CD4-positive, alpha-beta memory T cell (primary cell): ENCODE measurements at regions of chr9 and their contacts with region 1.

Region 1: GRCh38 chr9:36873247-36873875 is 160.7 kb downstream of the PAX5 start:
- DNase-seq: peak; percentile 59 to 64 (median 62)
- H3K4me3 ChIP-seq: no peak overlapping the region
- H3K4me3 Mint-ChIP-seq: no peak overlapping the region
- H3K27ac ChIP-seq: no peak overlapping the region
- H3K27ac Mint-ChIP-seq: peak overlapping the region in 1 of 7 donors; percentile 48
- H3K4me1 ChIP-seq: no peaks in the 10 kb centered on the region
- H3K4me1 Mint-ChIP-seq: peaks cover 0 to 2% (median 0%) of the 10 kb centered on the region in 4 donors
- H3K27me3 ChIP-seq: no peaks in the 10 kb centered on the region
- H3K27me3 Mint-ChIP-seq: peaks cover 0 to 9% of the 10 kb centered on the region in 2 donors

Region 2: DNA sequence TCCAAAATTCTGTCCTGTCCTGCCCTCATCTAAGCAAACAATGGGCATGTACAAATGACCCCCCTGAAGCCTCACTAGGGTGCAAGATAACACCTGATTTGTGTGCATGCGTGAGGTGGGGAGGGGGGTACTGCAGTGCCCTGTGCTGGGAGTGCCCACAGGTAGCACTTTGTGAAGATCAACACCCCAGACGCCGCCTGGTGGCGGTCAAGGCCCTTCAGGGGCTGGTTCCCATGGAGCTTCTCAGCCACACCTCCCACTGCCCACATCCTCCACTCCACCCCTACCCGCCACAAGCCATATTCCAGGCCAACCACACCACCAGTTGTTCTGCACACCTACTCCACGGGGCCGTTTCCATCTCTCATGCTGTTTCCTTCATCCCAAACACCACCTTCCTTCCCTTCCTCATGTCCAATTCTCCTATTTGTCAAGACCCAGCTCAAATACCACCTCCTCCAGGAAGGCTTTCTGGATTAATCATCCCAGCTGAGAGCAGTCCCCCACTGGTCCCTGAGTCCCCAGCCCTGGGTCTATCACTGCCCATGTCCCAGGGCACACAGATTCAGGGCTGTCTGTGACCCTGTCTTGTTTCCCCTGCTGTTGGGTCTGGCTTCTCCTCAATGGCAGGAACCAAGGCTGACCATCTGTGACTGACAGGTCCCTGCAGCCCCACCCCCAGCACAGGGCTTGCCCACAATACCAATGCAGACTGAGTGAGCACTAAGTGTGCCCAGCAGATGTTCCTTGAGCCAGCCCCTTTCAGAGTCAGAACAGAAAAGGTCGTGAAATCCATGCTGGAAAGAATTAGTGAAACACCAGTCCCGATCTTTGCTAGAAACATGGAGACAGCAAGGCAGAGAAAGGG is 17.7 kb before region 1 on chr9:
- CTCF ChIA-PET with region 1: interaction called, 22 read pairs
- POLR2A ChIA-PET with region 1: no interaction called
- intact Hi-C with region 1: no loop called
- DNase-seq: peak in 4 of 5 donors; percentile 13 to 22 (median 19)
- H3K4me3 ChIP-seq: no peak overlapping the region
- H3K4me3 Mint-ChIP-seq: no peak overlapping the region
- H3K27ac ChIP-seq: no peak overlapping the region
- H3K27ac Mint-ChIP-seq: peak overlapping the region in 3 of 7 donors; percentile 16 to 64 (median 33)
- H3K4me1 ChIP-seq: peaks cover 5% of the 10 kb centered on the region
- H3K4me1 Mint-ChIP-seq: peaks cover 4 to 10% (median 8%) of the 10 kb centered on the region in 4 donors
- H3K27me3 ChIP-seq: no peaks in the 10 kb centered on the region
- H3K27me3 Mint-ChIP-seq: peaks cover 0 to 7% of the 10 kb centered on the region in 2 donors

Region 3: GRCh38 chr9:36861528-36862205 is 11.7 kb before region 1 on chr9:
- CTCF ChIA-PET with region 1: interaction called, 22 read pairs
- POLR2A ChIA-PET with region 1: no interaction called
- intact Hi-C with region 1: no loop called
- DNase-seq: no peak
- H3K4me3 ChIP-seq: no peak overlapping the region
- H3K4me3 Mint-ChIP-seq: no peak overlapping the region
- H3K27ac ChIP-seq: no peak overlapping the region
- H3K27ac Mint-ChIP-seq: no peak overlapping the region
- H3K4me1 ChIP-seq: no peaks in the 10 kb centered on the region
- H3K4me1 Mint-ChIP-seq: no peaks in the 10 kb centered on the region
- H3K27me3 ChIP-seq: no peaks in the 10 kb centered on the region
- H3K27me3 Mint-ChIP-seq: peaks cover 2 to 10% of the 10 kb centered on the region in 2 donors

Region 4: DNA sequence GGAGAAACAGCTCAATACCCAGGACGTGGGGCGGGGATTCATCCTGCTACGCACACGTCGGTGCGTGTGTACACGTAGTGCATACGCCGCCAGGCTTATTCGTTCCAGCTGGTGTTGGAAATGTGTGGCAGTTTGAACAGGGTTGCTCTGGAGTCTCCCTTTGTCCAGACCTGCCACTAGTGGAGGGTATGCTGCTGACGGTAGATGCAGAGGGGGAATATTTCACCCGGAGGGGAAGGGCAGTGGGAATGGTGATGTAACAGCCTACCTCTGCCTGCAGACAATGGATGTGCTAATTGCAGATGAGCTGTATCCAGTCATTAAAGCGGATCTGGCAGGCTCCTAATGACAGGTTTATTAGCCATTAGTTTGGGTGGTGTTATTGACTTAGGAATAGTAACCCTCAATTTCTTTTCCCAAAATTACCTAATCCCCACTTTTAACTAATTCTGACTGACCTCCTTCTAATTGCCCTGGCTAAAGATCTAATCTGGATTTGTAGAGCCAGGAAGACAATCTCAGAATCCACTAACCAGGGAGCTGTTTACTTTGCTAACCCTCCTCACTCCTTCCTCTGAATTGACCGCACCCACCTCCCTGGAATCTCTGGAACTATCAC is 18.1 kb after region 1 on chr9:
- CTCF ChIA-PET with region 1: interaction called, 39 read pairs
- POLR2A ChIA-PET with region 1: no interaction called
- intact Hi-C with region 1: no loop called
- DNase-seq: no peak
- H3K4me3 ChIP-seq: no peak overlapping the region
- H3K4me3 Mint-ChIP-seq: no peak overlapping the region
- H3K27ac ChIP-seq: no peak overlapping the region
- H3K27ac Mint-ChIP-seq: no peak overlapping the region
- H3K4me1 ChIP-seq: no peaks in the 10 kb centered on the region
- H3K4me1 Mint-ChIP-seq: no peaks in the 10 kb centered on the region
- H3K27me3 ChIP-seq: no peaks in the 10 kb centered on the region
- H3K27me3 Mint-ChIP-seq: peaks cover 0 to 13% of the 10 kb centered on the region in 2 donors

Region 5: DNA sequence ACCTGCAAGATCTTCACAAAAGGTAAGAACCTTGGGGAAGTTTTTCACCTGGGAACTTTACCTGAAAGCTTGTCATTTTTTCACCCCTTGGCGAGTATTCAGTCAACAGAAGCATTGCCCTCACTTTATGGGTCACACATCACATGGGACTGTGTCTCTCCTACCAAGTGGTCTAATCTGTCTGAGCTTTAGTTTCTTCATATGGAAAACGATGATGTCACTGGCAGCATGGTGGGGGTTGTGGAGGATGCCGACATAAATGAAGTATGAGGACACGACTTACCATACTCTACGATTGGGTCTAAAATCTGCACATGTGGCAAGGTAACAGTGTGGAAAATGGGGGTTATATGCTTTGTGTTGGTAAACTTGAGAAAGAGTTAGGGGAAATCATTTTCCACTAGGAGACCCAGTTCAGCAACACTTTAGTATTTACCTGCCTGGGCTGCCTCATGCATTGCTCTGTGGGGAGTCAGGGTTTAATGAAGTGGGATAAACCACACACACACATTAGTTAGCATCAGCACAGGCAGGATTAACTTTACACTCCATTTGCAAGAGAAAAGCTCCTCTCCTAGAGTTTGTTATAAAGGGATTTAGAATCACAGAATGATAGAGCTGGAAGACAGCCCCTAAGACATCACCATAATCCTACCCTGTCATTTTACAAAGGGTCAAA is 180.5 kb after region 1 on chr9:
- CTCF ChIA-PET with region 1: no interaction called
- POLR2A ChIA-PET with region 1: no interaction called
- intact Hi-C with region 1: no loop called
- DNase-seq: no peak
- H3K4me3 ChIP-seq: no peak overlapping the region
- H3K4me3 Mint-ChIP-seq: no peak overlapping the region
- H3K27ac ChIP-seq: no peak overlapping the region
- H3K27ac Mint-ChIP-seq: no peak overlapping the region
- H3K4me1 ChIP-seq: no peaks in the 10 kb centered on the region
- H3K4me1 Mint-ChIP-seq: no peaks in the 10 kb centered on the region
- H3K27me3 ChIP-seq: peaks cover 7% of the 10 kb centered on the region
- H3K27me3 Mint-ChIP-seq: peaks cover 31 to 59% of the 10 kb centered on the region in 2 donors

Region 6: DNA sequence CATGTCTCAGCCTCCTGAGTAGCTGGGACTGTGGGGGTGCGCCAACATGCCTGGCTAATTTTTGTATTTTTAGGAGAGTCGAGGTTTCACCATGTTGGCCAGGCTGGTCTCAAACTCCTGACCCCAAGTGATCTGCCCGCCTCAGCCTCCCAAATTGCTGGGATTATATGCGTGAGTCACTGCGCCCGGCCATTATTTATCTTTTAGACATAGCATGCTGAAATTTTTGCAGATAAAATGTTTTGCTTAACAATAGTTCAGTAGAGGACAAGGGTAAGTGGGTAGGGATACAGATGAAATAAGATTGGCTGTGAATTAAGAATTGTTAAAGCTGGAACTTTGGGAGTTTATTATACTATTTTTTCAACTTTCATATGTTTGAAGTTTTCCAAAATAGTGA is 398.3 kb after region 1 on chr9:
- CTCF ChIA-PET with region 1: no interaction called
- POLR2A ChIA-PET with region 1: no interaction called
- intact Hi-C with region 1: no loop called
- DNase-seq: no peak
- H3K4me3 ChIP-seq: no peak overlapping the region
- H3K4me3 Mint-ChIP-seq: no peak overlapping the region
- H3K27ac ChIP-seq: no peak overlapping the region
- H3K27ac Mint-ChIP-seq: no peak overlapping the region
- H3K4me1 ChIP-seq: no peaks in the 10 kb centered on the region
- H3K4me1 Mint-ChIP-seq: peaks cover 0 to 10% (median under 1%) of the 10 kb centered on the region in 4 donors
- H3K27me3 ChIP-seq: no peaks in the 10 kb centered on the region
- H3K27me3 Mint-ChIP-seq: no peaks in the 10 kb centered on the region

Region 7: DNA sequence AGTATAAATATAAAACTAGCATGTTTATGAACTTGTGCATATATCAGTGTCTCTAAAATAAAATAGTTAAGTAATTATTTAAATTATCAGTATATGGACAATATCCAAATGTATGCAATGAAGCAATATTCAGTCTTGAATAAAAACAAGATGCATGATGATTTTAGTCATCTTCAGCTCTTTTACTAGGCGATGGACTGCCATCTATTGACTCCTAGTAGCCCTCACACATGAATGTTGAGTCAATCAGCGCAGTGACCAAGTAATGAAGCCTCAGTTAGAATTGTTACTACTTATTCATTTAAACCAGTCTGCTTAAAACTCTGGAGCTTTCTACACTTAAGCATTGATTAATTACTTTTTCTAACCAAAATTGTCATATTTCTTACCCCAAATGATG is 456.2 kb after region 1 on chr9:
- CTCF ChIA-PET with region 1: interaction called, 24 read pairs
- POLR2A ChIA-PET with region 1: no interaction called
- intact Hi-C with region 1: no loop called
- DNase-seq: peak in 4 of 5 donors; percentile 8 to 12 (median 10)
- H3K4me3 ChIP-seq: no peak overlapping the region
- H3K4me3 Mint-ChIP-seq: no peak overlapping the region
- H3K27ac ChIP-seq: no peak overlapping the region
- H3K27ac Mint-ChIP-seq: no peak overlapping the region
- H3K4me1 ChIP-seq: no peaks in the 10 kb centered on the region
- H3K4me1 Mint-ChIP-seq: no peaks in the 10 kb centered on the region
- H3K27me3 ChIP-seq: no peaks in the 10 kb centered on the region
- H3K27me3 Mint-ChIP-seq: no peaks in the 10 kb centered on the region

Region 8: GRCh38 chr9:37371565-37372464 is 498.5 kb after region 1 on chr9:
- CTCF ChIA-PET with region 1: interaction called, 11 read pairs
- POLR2A ChIA-PET with region 1: no interaction called
- intact Hi-C with region 1: no loop called
- DNase-seq: no peak
- H3K4me3 ChIP-seq: no peak overlapping the region
- H3K4me3 Mint-ChIP-seq: peak overlapping the region in 1 of 8 donors; percentile 27
- H3K27ac ChIP-seq: no peak overlapping the region
- H3K27ac Mint-ChIP-seq: peak overlapping the region in 1 of 7 donors; percentile 33
- H3K4me1 ChIP-seq: no peaks in the 10 kb centered on the region
- H3K4me1 Mint-ChIP-seq: no peaks in the 10 kb centered on the region
- H3K27me3 ChIP-seq: no peaks in the 10 kb centered on the region
- H3K27me3 Mint-ChIP-seq: peaks cover 10 to 11% of the 10 kb centered on the region in 2 donors

Region 9: GRCh38 chr9:37390759-37391158 is 517.4 kb after region 1 on chr9:
- CTCF ChIA-PET with region 1: interaction called, 9 read pairs
- POLR2A ChIA-PET with region 1: no interaction called
- intact Hi-C with region 1: loop called (anchors 1 kb)
- DNase-seq: peak in 4 of 5 donors; percentile 11 to 26 (median 14)
- H3K4me3 ChIP-seq: no peak overlapping the region
- H3K4me3 Mint-ChIP-seq: no peak overlapping the region
- H3K27ac ChIP-seq: no peak overlapping the region
- H3K27ac Mint-ChIP-seq: no peak overlapping the region
- H3K4me1 ChIP-seq: no peaks in the 10 kb centered on the region
- H3K4me1 Mint-ChIP-seq: no peaks in the 10 kb centered on the region
- H3K27me3 ChIP-seq: no peaks in the 10 kb centered on the region
- H3K27me3 Mint-ChIP-seq: peaks cover 1 to 2% of the 10 kb centered on the region in 2 donors